ENCODE measurements at regions of chr6 and their contacts with region 1.

Region 1: GRCh38 chr6:16761471-16762267 is 409 bp upstream of the ATXN1 start:
- DNase-seq: no peak
- H3K4me3 ChIP-seq: peak overlapping the region; percentile 88
- H3K27me3 ChIP-seq: no peaks in the 10 kb centered on the region
- CTCF ChIP-seq: no peak

Region 2: GRCh38 chr6:16332175-16332542 is 429.5 kb before region 1 on chr6:
- CTCF ChIA-PET with region 1: interaction called, 18 read pairs
- POLR2A ChIA-PET with region 1: no interaction called
- DNase-seq: no peak
- H3K4me3 ChIP-seq: no peak overlapping the region
- H3K27me3 ChIP-seq: no peaks in the 10 kb centered on the region
- CTCF ChIP-seq: peak; percentile 91

Region 3: GRCh38 chr6:16514249-16514648 is 247.4 kb before region 1 on chr6:
- CTCF ChIA-PET with region 1: interaction called, 79 read pairs
- POLR2A ChIA-PET with region 1: no interaction called
- DNase-seq: no peak
- H3K4me3 ChIP-seq: no peak overlapping the region
- H3K27me3 ChIP-seq: no peaks in the 10 kb centered on the region
- CTCF ChIP-seq: peak; percentile 59

Region 4: DNA sequence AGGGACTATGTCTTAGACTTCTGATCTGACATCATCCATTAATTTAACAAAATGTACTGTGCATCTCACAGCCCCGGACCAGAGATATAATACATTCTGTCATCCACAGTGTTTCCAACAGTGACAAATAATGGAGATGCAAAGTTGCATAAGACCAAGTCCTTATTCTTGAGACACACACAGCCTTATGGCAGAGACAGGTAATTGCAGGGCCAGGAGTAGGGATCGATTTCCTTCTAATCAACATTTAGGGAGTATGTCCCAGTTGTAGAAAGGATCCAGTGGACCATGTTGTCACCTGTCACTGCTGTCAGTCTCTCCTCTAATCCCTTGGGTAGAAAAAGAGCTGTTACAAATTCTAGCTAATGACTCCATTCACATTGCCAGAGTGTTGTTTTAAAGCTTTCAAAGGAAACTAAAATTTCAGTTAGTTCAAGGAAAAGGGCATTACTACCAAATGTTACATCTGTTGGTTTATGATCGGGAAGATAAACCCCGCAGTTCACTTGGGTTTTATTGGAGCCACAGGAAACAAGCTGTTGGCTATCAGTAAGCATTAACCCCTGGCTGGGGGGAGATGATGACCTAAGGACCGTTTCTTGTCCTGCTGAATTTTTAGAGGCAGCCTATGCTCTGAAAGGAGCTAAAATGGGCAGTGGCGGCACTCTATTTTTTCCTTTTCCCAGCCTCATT is 111.0 kb after region 1 on chr6:
- CTCF ChIA-PET with region 1: no interaction called
- POLR2A ChIA-PET with region 1: no interaction called
- DNase-seq: no peak
- H3K4me3 ChIP-seq: no peak overlapping the region
- H3K27me3 ChIP-seq: peaks cover 9% of the 10 kb centered on the region
- CTCF ChIP-seq: 0 out of 2 replicates have a peak, but pooled peaks have one; percentile 19

Region 5: GRCh38 chr6:16901782-16902181 is 140.1 kb after region 1 on chr6:
- CTCF ChIA-PET with region 1: no interaction called
- POLR2A ChIA-PET with region 1: no interaction called
- DNase-seq: peak; percentile 16
- H3K4me3 ChIP-seq: no peak overlapping the region
- H3K27me3 ChIP-seq: no peaks in the 10 kb centered on the region
- CTCF ChIP-seq: no peak

Region 6: DNA sequence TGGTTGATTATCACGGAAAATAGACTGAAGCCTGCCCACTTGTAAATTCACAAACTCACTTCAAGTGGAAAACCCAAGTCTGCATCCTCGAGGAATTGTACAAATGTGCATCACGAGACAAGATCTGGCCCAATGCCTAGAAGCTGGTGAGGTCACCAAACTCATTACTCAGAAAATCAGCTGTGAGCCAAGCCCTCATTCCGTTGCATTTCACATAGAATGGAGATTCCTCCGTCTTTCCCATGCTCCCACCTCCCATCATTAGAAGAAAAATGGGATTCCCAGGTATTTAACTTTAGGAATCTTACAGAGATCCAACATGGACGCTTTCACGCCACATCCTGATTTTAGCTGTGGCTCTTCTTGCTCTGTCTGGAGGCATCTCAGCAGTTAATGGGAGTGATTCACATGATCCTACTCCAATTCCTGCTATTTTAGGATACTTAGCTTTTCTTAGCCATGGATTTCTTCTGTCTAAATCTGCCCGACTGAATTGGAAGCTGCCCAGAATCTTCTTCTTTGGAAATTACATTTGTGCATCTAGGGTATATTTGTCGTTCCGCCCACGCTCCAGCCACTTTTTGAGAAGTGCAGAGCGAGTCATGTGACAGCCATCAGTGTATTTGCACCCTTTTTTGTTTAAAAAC is 271.4 kb after region 1 on chr6:
- CTCF ChIA-PET with region 1: interaction called, 11 read pairs
- POLR2A ChIA-PET with region 1: interaction called, 4 read pairs
- DNase-seq: peak; percentile 85
- H3K4me3 ChIP-seq: peak overlapping the region; percentile 2; the same call in 1 of the 2 replicates
- H3K27me3 ChIP-seq: no peaks in the 10 kb centered on the region
- CTCF ChIP-seq: no peak

Region 7: GRCh38 chr6:17098538-17098937 is 336.9 kb after region 1 on chr6:
- CTCF ChIA-PET with region 1: interaction called, 13 read pairs
- POLR2A ChIA-PET with region 1: no interaction called
- DNase-seq: no peak
- H3K4me3 ChIP-seq: no peak overlapping the region
- H3K27me3 ChIP-seq: peaks cover 5% of the 10 kb centered on the region; the same call in 1 of the 2 replicates
- CTCF ChIP-seq: no peak

Measured in BJ (cell line).